ENCODE measurements at regions of chr3 and their contacts with region 1.

Region 1: DNA sequence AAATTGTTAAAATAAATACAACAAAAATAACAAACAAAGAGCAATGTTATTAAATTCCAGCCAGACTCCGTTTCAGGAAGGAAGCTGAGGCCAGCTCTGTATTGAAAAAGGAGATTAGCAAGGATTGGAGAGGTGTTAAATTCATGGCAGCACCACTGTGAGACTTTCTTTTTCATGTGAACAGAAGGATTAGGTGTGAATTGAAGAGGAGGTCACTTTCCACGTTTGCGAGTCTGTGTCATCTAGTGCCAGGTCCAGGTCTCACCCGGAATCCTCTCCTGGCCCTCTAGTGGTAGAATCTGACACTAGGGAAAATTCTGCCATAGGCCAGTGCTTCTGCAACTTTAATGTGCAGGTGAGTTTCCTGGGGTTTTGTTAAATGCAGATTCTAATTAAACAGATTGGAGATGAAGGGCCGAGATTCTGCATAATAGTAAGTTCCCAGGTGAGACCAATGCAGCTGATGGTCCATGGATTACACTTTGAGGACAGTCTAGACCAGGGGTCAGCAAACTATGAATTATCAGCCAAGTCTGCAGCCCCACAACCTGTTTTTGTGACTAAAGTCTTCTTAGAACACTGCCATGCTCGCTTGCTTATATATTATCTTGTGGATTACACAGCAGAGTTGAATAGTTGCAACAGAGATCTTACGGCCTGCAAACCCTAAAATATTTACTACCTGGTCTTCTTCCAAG is 9.2 kb upstream of the SLC6A1 start:
- DNase-seq: no peak

Region 2: DNA sequence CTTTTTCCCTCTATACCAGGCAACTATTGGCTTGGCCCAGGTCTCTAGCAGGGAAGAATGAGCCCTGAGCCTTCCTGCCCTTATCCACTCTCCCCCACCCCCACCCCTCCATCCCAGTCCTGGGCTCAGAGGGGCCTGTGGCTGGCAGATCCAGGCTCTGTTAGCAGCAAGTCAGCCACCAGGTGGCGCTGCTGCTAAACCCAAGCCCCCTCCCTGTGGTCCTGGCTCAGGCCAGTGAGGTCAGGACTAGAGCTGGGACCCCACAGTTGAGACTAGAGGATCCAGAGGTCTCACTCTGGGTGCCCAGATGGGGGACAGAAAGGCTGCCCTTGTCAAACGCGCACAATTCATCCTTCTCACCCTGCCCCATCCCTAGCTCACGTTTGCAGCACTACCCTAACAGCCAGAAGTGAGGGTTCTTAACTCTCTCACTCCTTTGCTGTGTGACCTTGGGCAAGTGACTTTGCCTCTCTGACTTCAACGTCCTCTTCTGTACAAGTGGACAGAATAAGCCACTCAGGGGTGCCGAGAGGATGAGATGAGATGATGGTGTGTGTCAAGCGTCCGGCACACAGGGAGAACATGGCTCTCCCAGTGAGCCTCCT is 37.6 kb before region 1 on chr3:
- intact Hi-C with region 1: loop called (anchors 5 kb)
- DNase-seq: peak; percentile 85

Region 3: DNA sequence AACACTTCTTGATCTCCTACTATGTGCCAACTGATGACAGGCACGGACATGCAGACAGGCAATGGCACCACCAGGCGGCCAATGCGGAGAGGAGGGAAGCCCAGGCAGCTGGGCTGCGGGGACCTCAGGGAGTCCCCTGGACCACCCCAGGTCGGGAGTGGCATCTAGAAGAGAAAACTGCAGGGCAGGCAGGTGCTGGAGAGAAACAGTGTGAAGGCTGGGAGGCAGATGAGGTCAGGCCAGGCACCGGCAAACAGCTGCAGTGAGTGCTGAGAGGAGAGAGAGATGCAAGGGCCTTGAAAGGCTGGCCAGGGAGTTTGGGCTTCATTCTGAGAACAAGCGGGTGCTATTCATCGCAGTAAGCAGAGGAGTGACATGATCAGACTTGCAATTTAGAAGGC is 38.2 kb after region 1 on chr3:
- intact Hi-C with region 1: no loop called
- DNase-seq: no peak

Region 4: GRCh38 chr3:11155341-11156025 is 172.1 kb after region 1 on chr3:
- intact Hi-C with region 1: no loop called
- DNase-seq: peak; percentile 83

Measured in cardiac septum (tissue), 1 donor.